B cell (primary cell): ENCODE measurements at regions of chr12 and their contacts with region 1.

Region 1: GRCh38 chr12:54324617-54325441 is at the start of gene COPZ1:
- DNase-seq: peak; percentile 97
- ATAC-seq: peak; percentile 93
- H3K4me3 ChIP-seq: peak within 1 kb of the TSS; percentile 54 to 97 (median 87)
- H3K4me3 Mint-ChIP-seq: peak within 1 kb of the TSS; percentile 94
- H3K27ac ChIP-seq: peak within 1 kb of the TSS; percentile 76 to 89
- H3K27ac Mint-ChIP-seq: peak within 1 kb of the TSS; percentile 96
- H3K4me1 ChIP-seq: peaks cover 9 to 11% of the 10 kb centered on the region in 2 donors
- H3K4me1 Mint-ChIP-seq: peaks cover 30% of the 10 kb centered on the region
- H3K27me3 ChIP-seq: no peaks in the 10 kb centered on the region
- H3K27me3 Mint-ChIP-seq: no peaks in the 10 kb centered on the region
- CTCF ChIP-seq: peak; percentile 85
- total RNA-seq, gene COPZ1: 72.1 and 78.2 TPM in 2 replicates

Region 2: GRCh38 chr12:54214553-54215406 is 110.0 kb before region 1 on chr12:
- CTCF ChIA-PET with region 1: interaction called, 11 read pairs
- POLR2A ChIA-PET with region 1: interaction called, 13 read pairs
- intact Hi-C with region 1: no loop called
- DNase-seq: peak; percentile 95
- ATAC-seq: peak; percentile 83
- H3K4me3 ChIP-seq: peak overlapping the region; percentile 3 to 58 (median 46)
- H3K4me3 Mint-ChIP-seq: peak overlapping the region; percentile 90
- H3K27ac ChIP-seq: no peak overlapping the region
- H3K27ac Mint-ChIP-seq: peak overlapping the region; percentile 33
- H3K4me1 ChIP-seq: peaks cover 36 to 46% of the 10 kb centered on the region in 2 donors
- H3K4me1 Mint-ChIP-seq: peaks cover 44% of the 10 kb centered on the region
- H3K27me3 ChIP-seq: peaks cover 0 to 30% (median 6%) of the 10 kb centered on the region in 4 experiments
- H3K27me3 Mint-ChIP-seq: peaks cover 6% of the 10 kb centered on the region
- CTCF ChIP-seq: peak; percentile 100

Region 3: DNA sequence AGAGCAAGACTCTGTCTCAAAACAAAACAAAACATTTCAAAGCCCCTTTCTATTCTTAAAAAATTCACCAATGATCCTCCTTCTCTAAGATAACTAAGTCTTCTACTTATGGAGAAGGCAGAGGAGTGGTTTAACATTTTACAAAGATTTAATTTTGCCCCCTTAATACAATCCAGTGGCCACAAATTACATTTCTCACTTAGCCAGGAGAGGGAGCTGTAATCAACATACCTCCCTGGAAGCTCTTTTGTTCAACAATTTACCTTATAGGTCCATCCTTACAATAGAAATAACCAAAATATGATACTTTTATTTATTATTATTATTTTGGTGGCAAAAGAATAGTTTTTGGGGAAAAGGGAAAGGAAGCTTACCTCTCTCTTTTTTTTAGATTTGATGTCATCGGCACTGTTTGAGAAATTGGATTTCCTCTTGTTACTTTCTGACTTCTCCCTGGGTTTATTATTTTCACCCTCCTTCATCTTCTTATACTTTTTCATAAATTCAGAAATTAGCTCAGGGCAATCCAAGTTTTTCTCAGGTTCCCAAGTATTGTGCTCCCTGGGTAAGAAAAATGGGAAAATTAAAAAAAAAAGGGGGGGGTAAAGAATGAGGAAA is 73.1 kb before region 1 on chr12:
- CTCF ChIA-PET with region 1: interaction called, 15 read pairs
- POLR2A ChIA-PET with region 1: interaction called, 5 read pairs
- intact Hi-C with region 1: loop called (anchors 1 kb)
- DNase-seq: peak; percentile 63
- ATAC-seq: peak; percentile 56
- H3K4me3 ChIP-seq: no peak overlapping the region
- H3K4me3 Mint-ChIP-seq: no peak overlapping the region
- H3K27ac ChIP-seq: no peak overlapping the region
- H3K27ac Mint-ChIP-seq: no peak overlapping the region
- H3K4me1 ChIP-seq: peaks cover 0 to 4% of the 10 kb centered on the region in 2 donors
- H3K4me1 Mint-ChIP-seq: peaks cover 6% of the 10 kb centered on the region
- H3K27me3 ChIP-seq: no peaks in the 10 kb centered on the region
- H3K27me3 Mint-ChIP-seq: no peaks in the 10 kb centered on the region
- CTCF ChIP-seq: peak; percentile 77

Region 4: DNA sequence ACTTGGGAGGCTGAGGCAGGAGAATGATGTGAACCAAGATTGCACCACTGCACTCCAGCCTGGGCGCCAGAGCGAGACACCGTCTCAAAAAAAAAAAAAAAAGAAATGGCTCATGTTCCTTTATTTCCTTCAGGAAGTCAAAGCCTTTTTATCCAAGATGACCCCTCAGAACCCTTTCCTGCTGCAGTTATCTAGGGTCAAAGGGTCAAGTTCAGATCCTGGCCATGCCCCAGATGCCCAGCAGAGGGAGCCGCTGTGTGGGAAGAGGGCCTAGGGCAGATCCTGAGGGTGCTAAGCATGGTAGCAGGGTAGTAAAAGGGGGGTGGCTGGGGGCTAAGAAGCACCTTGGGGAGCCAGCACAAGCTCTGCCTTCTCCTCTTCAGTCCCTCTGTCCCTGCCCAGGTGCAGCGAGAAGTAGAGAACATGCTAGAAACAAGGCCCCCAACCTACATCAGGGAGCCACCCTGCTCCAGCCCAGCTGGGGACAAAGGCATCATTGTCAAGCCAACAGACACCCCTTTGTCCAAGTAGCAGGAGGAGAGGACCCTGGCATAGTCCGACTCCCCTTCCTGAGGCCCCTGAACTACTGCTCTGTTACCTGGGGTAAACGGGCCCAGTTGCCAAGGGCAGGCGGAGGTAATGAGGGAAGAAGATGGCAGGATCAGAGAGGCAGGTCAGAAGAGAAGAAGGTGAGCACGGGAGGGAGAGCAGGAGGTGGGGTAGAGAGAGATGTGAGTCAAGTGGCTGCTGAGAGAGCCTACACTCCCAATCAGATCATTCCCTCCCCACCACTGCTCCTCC is 30.5 kb before region 1 on chr12:
- CTCF ChIA-PET with region 1: interaction called, 61 read pairs
- POLR2A ChIA-PET with region 1: interaction called, 6 read pairs
- intact Hi-C with region 1: loop called (anchors 1 kb)
- DNase-seq: peak; percentile 59
- ATAC-seq: peak; percentile 74
- H3K4me3 ChIP-seq: no peak overlapping the region
- H3K4me3 Mint-ChIP-seq: no peak overlapping the region
- H3K27ac ChIP-seq: no peak overlapping the region
- H3K27ac Mint-ChIP-seq: no peak overlapping the region
- H3K4me1 ChIP-seq: peaks cover 15 to 18% of the 10 kb centered on the region in 2 donors
- H3K4me1 Mint-ChIP-seq: peaks cover 15% of the 10 kb centered on the region
- H3K27me3 ChIP-seq: peaks cover 0 to 16% (median 6%) of the 10 kb centered on the region in 4 experiments
- H3K27me3 Mint-ChIP-seq: peaks cover 15% of the 10 kb centered on the region
- CTCF ChIP-seq: peak; percentile 48

Region 5: DNA sequence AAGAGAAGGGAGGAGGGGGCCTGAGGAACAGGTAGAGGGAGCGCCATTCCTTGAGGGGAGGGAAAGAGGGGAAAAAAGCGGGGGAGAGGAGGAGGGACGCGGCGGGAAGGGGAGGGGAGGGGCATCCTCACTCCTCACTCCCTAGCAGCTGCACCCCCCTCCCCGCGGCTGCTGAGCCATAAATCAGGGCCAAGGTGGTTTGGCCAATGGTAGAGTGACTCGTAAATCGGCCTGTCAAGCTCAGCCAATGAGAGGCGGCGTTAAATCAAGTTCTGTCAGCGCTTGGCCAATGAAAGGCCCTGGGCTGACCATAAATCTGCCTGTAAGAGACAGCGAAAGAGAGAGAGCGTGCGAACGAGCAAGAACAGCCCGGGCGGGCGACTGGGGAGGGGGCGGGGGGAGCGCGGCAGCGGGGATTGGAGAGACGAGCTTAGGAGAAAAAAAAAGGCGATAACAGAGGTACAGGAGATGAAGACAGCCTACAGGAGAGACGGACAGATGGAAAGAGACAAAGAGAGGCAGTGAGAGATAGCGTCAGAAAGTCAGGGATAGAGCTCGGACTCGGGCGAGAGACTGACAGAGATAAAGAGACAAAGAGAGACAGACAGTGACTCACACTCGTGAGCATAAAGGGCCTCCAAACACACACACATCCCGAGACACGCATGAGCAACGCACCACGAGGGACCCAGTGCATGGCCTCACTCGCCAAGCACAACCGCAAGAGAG is 34.4 kb after region 1 on chr12:
- CTCF ChIA-PET with region 1: interaction called, 24 read pairs
- POLR2A ChIA-PET with region 1: interaction called, 11 read pairs
- intact Hi-C with region 1: loop called (anchors 1 kb)
- DNase-seq: peak; percentile 96
- ATAC-seq: peak; percentile 98
- H3K4me3 ChIP-seq: peak overlapping the region; percentile 56 to 92 (median 85)
- H3K4me3 Mint-ChIP-seq: no peak overlapping the region
- H3K27ac ChIP-seq: peak overlapping the region; percentile 40 to 81
- H3K27ac Mint-ChIP-seq: no peak overlapping the region
- H3K4me1 ChIP-seq: peaks cover 15 to 17% of the 10 kb centered on the region in 2 donors
- H3K4me1 Mint-ChIP-seq: peaks cover 10% of the 10 kb centered on the region
- H3K27me3 ChIP-seq: no peaks in the 10 kb centered on the region
- H3K27me3 Mint-ChIP-seq: no peaks in the 10 kb centered on the region
- CTCF ChIP-seq: no peak